ENCODE measurements at regions of chr1 and their contacts with region 1.

Region 1: GRCh38 chr1:246506674-246507481 is at the start of gene SMYD3:
- DNase-seq: peak; percentile 76 to 92
- ATAC-seq: peak; percentile 95
- H3K4me3 ChIP-seq: peak within 1 kb of the TSS; percentile 51 to 72
- H3K27ac ChIP-seq: no peak within 1 kb of the TSS
- H3K4me1 ChIP-seq: no peaks in the 10 kb centered on the region
- H3K27me3 ChIP-seq: no peaks in the 10 kb centered on the region
- total RNA-seq, gene SMYD3: 11.5 to 29.1 TPM

Region 2: DNA sequence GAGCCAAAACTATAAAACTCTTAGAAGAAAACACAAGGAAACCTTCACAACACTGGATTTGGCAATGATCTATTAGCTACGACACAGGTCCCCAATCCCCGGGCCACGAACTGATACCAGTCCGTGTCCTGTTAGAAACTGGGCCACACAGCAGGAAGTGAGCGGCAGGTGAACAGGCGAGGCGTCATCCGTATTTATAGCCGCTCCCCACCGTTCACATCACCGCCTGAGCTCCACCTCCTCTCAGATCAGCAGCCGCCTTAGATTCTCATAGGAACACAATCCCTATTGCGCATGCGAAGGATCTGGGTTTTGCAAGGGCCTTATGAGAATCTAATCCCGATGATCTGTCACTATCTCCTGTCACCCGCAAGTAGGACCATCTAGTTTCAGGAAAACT is 47.3 kb after region 1 on chr1:
- intact Hi-C with region 1: no loop called
- DNase-seq: no peak
- ATAC-seq: no peak
- H3K4me3 ChIP-seq: no peak overlapping the region
- H3K27ac ChIP-seq: no peak overlapping the region
- H3K4me1 ChIP-seq: no peaks in the 10 kb centered on the region
- H3K27me3 ChIP-seq: no peaks in the 10 kb centered on the region

Region 3: DNA sequence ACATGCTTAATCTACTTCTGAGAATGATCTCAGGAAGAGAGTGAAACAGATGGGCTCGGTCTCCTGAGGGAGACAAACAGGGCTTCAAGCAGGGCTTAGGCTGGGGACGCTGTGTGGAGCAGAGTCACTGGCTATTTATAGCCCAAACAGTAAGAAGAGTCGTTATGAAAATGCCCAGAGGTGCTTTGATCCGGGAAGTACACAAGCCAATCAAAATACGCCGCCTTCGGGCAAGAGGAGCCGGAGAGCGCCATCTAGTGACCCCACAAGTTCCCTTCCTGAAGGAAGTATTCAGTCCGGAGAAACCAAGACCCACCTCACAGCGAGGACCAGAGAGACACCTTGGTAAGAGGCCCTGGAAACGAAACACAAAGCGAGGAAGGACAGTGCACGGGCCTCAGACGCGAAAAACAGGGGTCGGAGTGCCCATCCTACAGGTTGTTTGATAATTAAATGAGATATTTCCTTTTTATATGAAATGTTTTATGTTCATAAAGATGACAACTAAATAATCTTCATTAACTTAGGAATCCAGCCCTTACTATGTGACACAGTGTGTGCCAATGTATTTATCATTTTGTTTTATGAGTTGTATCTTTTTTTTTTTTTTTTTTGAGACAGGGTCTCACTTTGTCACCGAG is 192.3 kb after region 1 on chr1:
- intact Hi-C with region 1: loop called (anchors 2 to 5 kb)
- DNase-seq: peak; percentile 89 to 90
- ATAC-seq: peak; percentile 90
- H3K4me3 ChIP-seq: no peak overlapping the region
- H3K27ac ChIP-seq: no peak overlapping the region
- H3K4me1 ChIP-seq: no peaks in the 10 kb centered on the region
- H3K27me3 ChIP-seq: no peaks in the 10 kb centered on the region

Measured in aorta (tissue), 5 donors.